Esophagus squamous epithelium (tissue), 5 donors: ENCODE measurements at regions of chr22 and their contacts with region 1.

Region 1: DNA sequence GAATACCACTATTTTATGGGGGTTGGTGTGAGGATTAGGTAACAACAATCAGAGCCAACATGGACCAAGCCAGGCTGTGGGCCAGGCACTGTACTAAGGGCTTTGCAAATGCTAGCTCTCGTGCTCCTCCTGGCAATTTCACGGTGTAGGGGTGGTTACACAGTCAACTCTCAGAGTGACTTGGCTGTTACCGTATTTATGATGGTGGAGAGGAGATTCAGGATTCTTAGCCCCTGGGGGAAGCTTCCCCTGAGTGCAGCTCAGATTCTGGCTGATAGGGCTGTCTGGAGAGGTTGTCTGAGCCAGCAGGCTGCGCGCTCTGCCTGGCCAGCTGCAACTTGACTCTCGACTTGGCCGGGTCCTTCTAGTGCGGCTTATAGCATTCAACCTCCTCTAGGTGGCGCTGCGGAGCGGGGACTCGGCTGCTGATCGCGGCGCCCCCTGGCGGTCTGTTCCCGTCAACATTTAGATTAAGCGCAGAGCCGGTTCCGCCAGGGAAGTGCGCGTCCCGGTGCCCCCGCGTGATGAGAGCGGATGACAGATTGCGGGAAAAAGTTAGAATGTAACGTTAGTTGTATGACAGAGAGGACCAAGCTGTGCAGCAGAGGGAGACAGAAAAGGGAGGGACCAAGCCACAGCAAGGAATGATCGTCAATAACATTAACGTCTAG is 4.5 kb upstream of the NCF4 start:
- DNase-seq: peak; percentile 48
- H3K4me3 ChIP-seq: peak overlapping the region in 1 of 4 donors; percentile 37
- H3K27ac ChIP-seq: no peak overlapping the region
- H3K4me1 ChIP-seq: peaks cover 12 to 45% (median 26%) of the 10 kb centered on the region in 3 donors
- H3K27me3 ChIP-seq: peaks cover 0 to 13% (median 0%) of the 10 kb centered on the region in 4 donors
- CTCF ChIP-seq: peak; percentile 100
- POLR2A ChIP-seq: no peak

Region 2: DNA sequence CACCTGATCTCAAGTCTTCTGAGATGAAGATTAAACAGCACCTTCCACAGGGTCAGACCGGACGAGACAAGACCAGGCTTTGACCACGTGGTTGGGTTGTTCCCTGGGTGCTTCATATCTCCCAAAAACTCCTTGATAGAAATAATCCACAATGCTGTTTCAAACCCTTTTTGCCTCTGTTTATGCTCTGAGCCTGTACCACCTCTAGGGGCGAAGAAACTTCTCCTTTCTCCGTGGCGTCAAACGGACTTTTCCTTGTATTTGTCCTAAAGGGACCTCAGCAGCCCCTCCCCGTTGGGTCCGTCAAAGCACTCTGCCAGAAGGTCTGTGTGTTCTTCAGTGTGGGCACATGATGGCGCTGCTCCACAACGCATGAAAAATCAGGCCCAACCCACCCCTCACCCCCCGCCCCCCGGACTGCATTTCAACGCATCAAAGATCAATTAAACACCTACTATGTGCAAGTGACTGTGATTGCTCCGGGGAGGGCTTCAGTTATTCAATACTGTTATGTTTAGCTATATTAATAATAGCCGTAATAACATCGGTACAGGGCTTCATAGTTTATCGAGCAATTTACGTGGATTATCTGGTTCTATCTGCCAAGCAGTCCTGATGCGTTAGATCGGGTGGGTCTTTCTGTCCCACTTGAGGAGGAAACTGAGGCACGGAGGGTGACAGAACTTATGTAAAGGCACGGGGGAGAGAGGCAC is 310.0 kb before region 1 on chr22:
- intact Hi-C with region 1: loop called (anchors 10 kb)
- DNase-seq: no peak
- H3K4me3 ChIP-seq: no peak overlapping the region
- H3K27ac ChIP-seq: no peak overlapping the region
- H3K4me1 ChIP-seq: peaks cover 4 to 38% (median 16%) of the 10 kb centered on the region in 3 donors
- H3K27me3 ChIP-seq: peaks cover 0 to 42% (median 4%) of the 10 kb centered on the region in 4 donors
- CTCF ChIP-seq: peak in 4 of 6 experiments; percentile 10 to 47 (median 28)
- POLR2A ChIP-seq: no peak

Region 3: GRCh38 chr22:36781656-36782627 is 74.3 kb before region 1 on chr22:
- intact Hi-C with region 1: loop called (anchors 5 kb)
- DNase-seq: peak; percentile 17
- H3K4me3 ChIP-seq: no peak overlapping the region
- H3K27ac ChIP-seq: peak overlapping the region in 2 of 4 donors; percentile 42 to 78
- H3K4me1 ChIP-seq: peaks cover 0 to 11% (median 7%) of the 10 kb centered on the region in 3 donors
- H3K27me3 ChIP-seq: peaks cover 0 to 39% (median 0%) of the 10 kb centered on the region in 4 donors
- CTCF ChIP-seq: peak; percentile 82 to 96 (median 90)
- POLR2A ChIP-seq: no peak

Region 4: DNA sequence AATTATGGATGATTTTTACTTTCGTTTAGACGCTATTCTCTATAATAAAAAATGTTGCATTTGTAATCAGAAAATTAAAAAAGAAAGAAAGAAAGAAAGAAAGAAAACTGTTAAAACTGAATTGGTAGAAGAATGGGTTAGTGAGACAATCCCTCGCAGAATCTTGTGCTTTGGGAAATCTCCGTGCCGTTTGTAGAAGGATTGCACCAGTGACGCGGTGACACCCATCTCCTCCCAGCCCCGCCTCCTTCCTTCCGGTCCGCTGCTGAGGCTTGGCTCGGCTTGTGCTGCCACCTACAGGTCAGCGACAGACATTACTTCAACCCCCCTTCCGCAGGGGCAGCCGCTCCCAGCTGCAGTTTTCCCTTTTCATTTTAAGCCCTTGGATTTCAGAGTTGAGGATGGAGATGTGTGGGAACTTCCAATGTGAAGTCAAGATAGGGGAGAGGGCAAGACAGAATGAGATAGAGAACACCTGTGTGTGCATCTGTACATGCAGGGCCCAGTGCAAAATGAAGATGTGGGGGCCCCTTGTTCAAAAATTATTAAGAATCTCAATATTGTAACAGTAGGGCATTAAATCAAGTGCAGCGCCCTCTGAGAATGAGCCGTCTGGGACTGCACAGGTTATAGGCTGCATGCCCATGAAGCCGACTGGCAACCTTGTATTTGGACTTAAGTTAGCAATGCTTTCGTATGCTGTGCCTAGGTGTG is 121.8 kb after region 1 on chr22:
- intact Hi-C with region 1: loop called (anchors 5 kb)
- DNase-seq: peak; percentile 42
- H3K4me3 ChIP-seq: peak overlapping the region; percentile 25 to 58 (median 44)
- H3K27ac ChIP-seq: peak overlapping the region in 3 of 4 donors; percentile 49 to 65 (median 50)
- H3K4me1 ChIP-seq: peaks cover 5 to 23% (median 5%) of the 10 kb centered on the region in 3 donors
- H3K27me3 ChIP-seq: peaks cover 0 to 23% (median 0%) of the 10 kb centered on the region in 4 donors
- CTCF ChIP-seq: peak; percentile 89 to 98 (median 96)
- POLR2A ChIP-seq: no peak